Endothelial cell of umbilical vein (primary cell): ENCODE measurements at regions of chr18 and their contacts with region 1.

Region 1: DNA sequence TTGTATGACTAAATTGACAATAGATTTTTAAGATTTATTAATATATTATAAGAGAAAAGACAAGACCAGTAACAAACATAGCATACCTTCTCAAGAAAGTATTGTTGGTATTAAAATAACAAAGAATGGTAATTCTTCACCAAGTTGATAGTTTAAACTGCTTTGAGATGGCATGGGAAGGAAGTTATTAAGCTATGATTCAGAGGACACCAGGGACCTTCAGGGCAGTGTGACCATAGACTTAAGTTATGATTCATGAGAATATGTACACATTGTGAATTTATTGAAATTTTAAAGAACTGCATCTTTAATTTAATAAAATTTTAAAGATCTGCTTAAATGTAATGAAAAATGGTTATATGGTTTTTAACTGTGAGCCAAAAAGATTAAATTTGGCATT is 205.7 kb downstream of the DSEL start:
- DNase-seq: peak; percentile 48
- H3K4me3 ChIP-seq: no peak overlapping the region
- H3K27ac ChIP-seq: no peak overlapping the region
- H3K4me1 ChIP-seq: peaks cover 5% of the 10 kb centered on the region
- H3K27me3 ChIP-seq: no peaks in the 10 kb centered on the region
- CTCF ChIP-seq: no peak
- POLR2A ChIP-seq: no peak

Region 2: DNA sequence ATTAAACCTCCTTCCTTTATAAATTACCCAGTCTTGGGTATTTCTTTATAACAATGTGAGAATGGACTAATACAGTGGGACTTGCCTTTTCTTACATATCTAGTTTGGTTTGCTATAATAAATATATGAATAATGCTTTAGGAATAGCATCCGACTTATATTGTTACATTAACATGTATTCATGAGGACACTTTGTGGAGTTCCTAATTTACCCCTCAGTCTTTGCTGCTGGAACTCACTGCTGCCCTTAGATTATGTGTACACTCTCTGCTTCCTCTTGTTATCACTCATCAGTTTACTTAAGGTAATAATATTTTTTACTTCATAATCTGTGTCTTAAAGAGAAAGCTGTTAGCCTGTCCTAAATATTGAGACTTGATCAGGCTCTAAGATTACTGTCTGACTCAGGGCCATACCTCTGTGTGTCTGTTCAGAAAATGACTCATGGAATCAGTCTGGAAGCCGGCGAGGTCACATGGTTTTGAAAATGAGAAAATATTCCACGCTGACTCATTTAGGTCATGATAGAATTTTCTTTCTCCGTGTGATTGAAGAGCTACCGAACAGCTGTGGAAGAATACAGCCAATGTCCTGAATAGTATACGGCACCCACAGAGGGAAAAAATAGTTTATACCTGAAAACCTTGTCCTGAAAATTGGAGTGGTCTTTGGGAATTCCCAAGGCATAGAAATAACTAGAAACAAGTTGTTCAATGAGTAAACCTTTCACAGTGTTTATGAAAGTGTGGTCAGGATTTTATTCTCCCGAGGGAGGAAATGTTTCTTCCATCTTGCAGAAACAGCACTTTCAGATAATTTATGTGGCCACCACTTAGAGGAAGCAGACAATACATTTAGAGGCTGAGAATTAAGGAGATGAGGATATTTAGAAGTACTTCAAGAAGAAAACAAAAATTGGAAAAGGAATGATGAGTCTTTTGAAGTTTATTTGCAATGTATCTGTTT is 49.3 kb after region 1 on chr18:
- CTCF ChIA-PET with region 1: interaction called, 3 read pairs
- POLR2A ChIA-PET with region 1: no interaction called
- dilution Hi-C with region 1: no loop called
- intact Hi-C with region 1: loop called (anchors 5 kb)
- DNase-seq: peak; percentile 97
- H3K4me3 ChIP-seq: peak overlapping the region; percentile 1 to 64 (median 21)
- H3K27ac ChIP-seq: peak overlapping the region; percentile 78
- H3K4me1 ChIP-seq: peaks cover 16% of the 10 kb centered on the region
- H3K27me3 ChIP-seq: no peaks in the 10 kb centered on the region
- CTCF ChIP-seq: no peak
- POLR2A ChIP-seq: no peak